WTC11 (cell line): ENCODE measurements at regions of chr20 and their contacts with region 1.

Region 1: GRCh38 chr20:60210779-60211617 is 252.8 kb downstream of the CDH26 start:
- DNase-seq: peak; percentile 73
- ATAC-seq: peak; percentile 88
- H3K4me3 Mint-ChIP-seq: no peak overlapping the region
- H3K27ac Mint-ChIP-seq: no peak overlapping the region
- H3K4me1 Mint-ChIP-seq: peaks cover 4% of the 10 kb centered on the region; the same call in 1 of the 2 replicates
- H3K27me3 Mint-ChIP-seq: peaks cover 19% of the 10 kb centered on the region
- CTCF ChIP-seq: peak; percentile 78

Region 2: GRCh38 chr20:60224914-60225313 is 13.9 kb after region 1 on chr20:
- CTCF ChIA-PET with region 1: interaction called, 14 read pairs
- POLR2A ChIA-PET with region 1: no interaction called
- DNase-seq: peak; percentile 55
- ATAC-seq: peak; percentile 41
- H3K4me3 Mint-ChIP-seq: no peak overlapping the region
- H3K27ac Mint-ChIP-seq: no peak overlapping the region
- H3K4me1 Mint-ChIP-seq: no peaks in the 10 kb centered on the region
- H3K27me3 Mint-ChIP-seq: peaks cover 28% of the 10 kb centered on the region
- CTCF ChIP-seq: peak; percentile 30

Region 3: DNA sequence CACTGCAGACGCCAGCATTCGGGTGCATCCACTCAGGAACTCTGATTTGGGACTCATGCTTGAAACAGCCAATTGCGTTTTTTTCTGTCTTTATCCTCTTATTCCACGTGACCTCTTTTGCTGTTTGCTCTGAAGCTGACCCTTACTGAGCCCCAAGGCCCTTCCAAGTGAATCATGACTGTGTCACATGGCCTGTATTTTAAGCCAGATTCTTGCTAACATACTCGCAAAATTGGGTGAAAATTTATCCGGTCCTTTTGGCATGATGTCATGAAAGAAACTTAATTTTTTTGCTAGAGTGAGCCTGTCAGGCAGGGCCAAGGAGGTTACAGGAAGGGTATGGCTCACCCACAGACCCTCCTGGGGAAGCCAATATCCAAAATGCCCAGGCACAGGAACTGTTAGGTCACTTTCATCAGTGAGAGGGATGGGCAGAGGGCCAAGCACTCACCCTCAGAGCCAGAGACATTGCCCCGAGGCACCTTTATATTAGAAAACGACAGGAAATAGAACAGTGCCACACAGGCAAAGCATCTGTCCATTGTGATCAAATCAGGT is 43.9 kb after region 1 on chr20:
- CTCF ChIA-PET with region 1: interaction called, 11 read pairs
- POLR2A ChIA-PET with region 1: no interaction called
- DNase-seq: no peak
- ATAC-seq: no peak
- H3K4me3 Mint-ChIP-seq: no peak overlapping the region
- H3K27ac Mint-ChIP-seq: no peak overlapping the region
- H3K4me1 Mint-ChIP-seq: peaks cover 11% of the 10 kb centered on the region
- H3K27me3 Mint-ChIP-seq: peaks cover 46% of the 10 kb centered on the region
- CTCF ChIP-seq: no peak